ENCODE measurements at regions of chr7 and their contacts with region 1.

Region 1: GRCh38 chr7:142788303-142789289 is 17.8 kb downstream of the PRSS2 start:
- DNase-seq: peak in 5 of 9 donors; percentile 7 to 33 (median 18)
- ATAC-seq: no peak
- H3K4me3 ChIP-seq: peak overlapping the region; percentile 96
- H3K4me3 Mint-ChIP-seq: peak overlapping the region; percentile 91 to 100 (median 98)
- H3K27ac ChIP-seq: peak overlapping the region; percentile 98
- H3K27ac Mint-ChIP-seq: peak overlapping the region; percentile 95 to 100 (median 99)
- H3K4me1 ChIP-seq: peaks cover 14 to 19% of the 10 kb centered on the region in 2 donors
- H3K4me1 Mint-ChIP-seq: peaks cover 13 to 28% (median 21%) of the 10 kb centered on the region in 7 donors
- H3K27me3 ChIP-seq: no peaks in the 10 kb centered on the region
- H3K27me3 Mint-ChIP-seq: peaks cover 0 to 3% (median 0%) of the 10 kb centered on the region in 5 donors

Region 2: DNA sequence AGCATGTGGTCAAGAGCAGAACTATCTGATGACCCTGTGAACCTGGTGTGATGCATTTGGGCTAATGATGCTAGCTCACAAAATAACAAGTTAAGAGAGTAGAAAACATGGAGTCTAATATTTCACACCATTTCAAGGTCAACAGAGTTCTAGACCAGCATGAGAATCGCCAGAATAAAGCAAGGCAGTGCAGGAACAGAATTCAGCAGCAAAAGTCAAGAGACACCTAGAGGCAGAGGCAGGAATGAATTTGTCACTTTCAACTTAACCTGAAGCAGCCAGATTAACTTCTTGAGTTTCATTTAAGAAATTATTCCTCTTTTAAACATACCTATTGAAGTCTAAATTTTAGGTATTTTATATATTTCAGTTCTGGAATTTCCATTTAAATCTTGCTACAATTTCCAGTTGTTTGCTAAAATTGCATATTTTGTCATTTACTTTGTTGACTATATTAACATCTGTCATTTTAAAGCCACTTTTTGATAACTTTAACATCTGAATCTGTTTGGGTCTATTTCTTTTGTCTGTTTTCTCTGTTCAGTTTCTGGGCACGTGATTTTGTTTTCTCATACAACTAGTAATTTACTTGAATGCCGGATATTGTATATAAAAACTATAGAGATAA is 486.6 kb before region 1 on chr7:
- CTCF ChIA-PET with region 1: no interaction called
- POLR2A ChIA-PET with region 1: interaction called, 19 read pairs
- intact Hi-C with region 1: no loop called
- DNase-seq: peak in 1 of 9 donors; percentile 34
- ATAC-seq: no peak
- H3K4me3 ChIP-seq: no peak overlapping the region
- H3K4me3 Mint-ChIP-seq: peak overlapping the region in 2 of 10 donors; percentile 17 to 49
- H3K27ac ChIP-seq: no peak overlapping the region
- H3K27ac Mint-ChIP-seq: no peak overlapping the region
- H3K4me1 ChIP-seq: peaks cover 0 to 28% of the 10 kb centered on the region in 2 donors
- H3K4me1 Mint-ChIP-seq: peaks cover 7 to 52% (median 35%) of the 10 kb centered on the region in 7 donors
- H3K27me3 ChIP-seq: no peaks in the 10 kb centered on the region
- H3K27me3 Mint-ChIP-seq: peaks cover 4 to 25% (median 16%) of the 10 kb centered on the region in 5 donors

Region 3: DNA sequence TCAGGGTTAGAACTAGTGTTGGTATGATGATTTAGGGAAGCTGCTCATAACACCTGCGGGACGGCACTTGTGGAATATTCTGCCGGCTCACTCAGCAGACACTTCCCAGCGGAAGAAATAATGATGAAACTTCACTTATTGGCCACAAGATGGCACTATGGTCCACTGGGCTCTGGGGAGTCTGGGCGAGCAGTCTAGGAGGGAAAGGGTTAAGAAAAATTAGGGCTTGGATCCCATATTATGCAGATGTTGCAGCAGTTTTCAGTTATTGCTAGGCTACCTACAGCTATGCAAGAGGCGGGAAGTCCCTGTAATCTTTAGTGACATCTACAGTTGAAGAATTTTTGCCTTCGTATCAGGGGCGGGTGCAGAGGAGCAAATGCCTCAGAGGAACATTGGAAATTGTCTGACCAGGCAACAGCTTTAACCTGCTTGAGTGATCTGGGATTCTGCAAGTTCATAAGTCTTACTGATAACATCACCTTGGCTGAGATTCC is 292.0 kb before region 1 on chr7:
- CTCF ChIA-PET with region 1: no interaction called
- POLR2A ChIA-PET with region 1: interaction called, 16 read pairs
- intact Hi-C with region 1: no loop called
- DNase-seq: peak in 7 of 9 donors; percentile 39 to 58 (median 45)
- ATAC-seq: peak; percentile 71
- H3K4me3 ChIP-seq: peak overlapping the region; percentile 30
- H3K4me3 Mint-ChIP-seq: peak overlapping the region; percentile 41 to 85 (median 70)
- H3K27ac ChIP-seq: peak overlapping the region; percentile 64
- H3K27ac Mint-ChIP-seq: peak overlapping the region; percentile 33 to 93 (median 77)
- H3K4me1 ChIP-seq: peaks cover 5 to 46% of the 10 kb centered on the region in 2 donors
- H3K4me1 Mint-ChIP-seq: peaks cover 15 to 72% (median 65%) of the 10 kb centered on the region in 7 donors
- H3K27me3 ChIP-seq: no peaks in the 10 kb centered on the region
- H3K27me3 Mint-ChIP-seq: peaks cover 0 to 9% (median 0%) of the 10 kb centered on the region in 5 donors

Region 4: GRCh38 chr7:142612237-142612881 is 176.2 kb before region 1 on chr7:
- CTCF ChIA-PET with region 1: no interaction called
- POLR2A ChIA-PET with region 1: interaction called, 10 read pairs
- intact Hi-C with region 1: no loop called
- DNase-seq: no peak
- ATAC-seq: no peak
- H3K4me3 ChIP-seq: no peak overlapping the region
- H3K4me3 Mint-ChIP-seq: no peak overlapping the region
- H3K27ac ChIP-seq: no peak overlapping the region
- H3K27ac Mint-ChIP-seq: peak overlapping the region in 5 of 9 donors; percentile 5 to 42 (median 38)
- H3K4me1 ChIP-seq: no peaks in the 10 kb centered on the region
- H3K4me1 Mint-ChIP-seq: peaks cover 0 to 45% (median 15%) of the 10 kb centered on the region in 7 donors
- H3K27me3 ChIP-seq: no peaks in the 10 kb centered on the region
- H3K27me3 Mint-ChIP-seq: peaks cover 0 to 8% (median 4%) of the 10 kb centered on the region in 5 donors

Region 5: DNA sequence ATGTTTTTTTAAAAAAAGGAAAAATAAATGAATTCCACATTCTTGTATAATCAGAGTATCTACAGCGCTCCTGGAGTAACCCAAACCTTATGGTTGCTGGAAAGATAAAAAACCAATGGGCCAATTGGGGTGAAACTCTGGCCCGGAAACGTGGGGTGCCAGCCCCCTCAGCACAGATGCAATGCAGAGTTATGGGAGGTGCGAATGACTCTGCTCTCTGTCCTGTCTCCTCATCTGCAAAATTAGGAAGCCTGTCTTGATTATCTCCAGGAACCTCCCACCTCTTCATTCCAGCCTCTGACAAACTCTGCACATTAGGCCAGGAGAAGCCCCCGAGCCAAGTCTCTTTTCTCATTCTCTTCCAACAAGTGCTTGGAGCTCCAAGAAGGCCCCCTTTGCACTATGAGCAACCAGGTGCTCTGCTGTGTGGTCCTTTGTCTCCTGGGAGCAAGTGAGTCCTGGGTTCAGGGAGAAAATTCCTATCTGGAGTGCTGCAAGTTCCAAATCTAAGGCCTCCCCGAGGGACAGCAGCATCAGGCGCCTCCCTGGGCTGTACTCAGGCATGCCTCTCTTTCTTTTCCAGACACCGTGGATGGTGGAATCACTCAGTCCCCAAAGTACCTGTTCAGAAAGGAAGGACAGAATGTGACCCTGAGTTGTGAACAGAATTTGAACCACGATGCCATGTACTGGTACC is 169.8 kb before region 1 on chr7:
- CTCF ChIA-PET with region 1: interaction called, 4 read pairs
- POLR2A ChIA-PET with region 1: interaction called, 11 read pairs
- intact Hi-C with region 1: no loop called
- DNase-seq: no peak
- ATAC-seq: no peak
- H3K4me3 ChIP-seq: peak overlapping the region; percentile 36
- H3K4me3 Mint-ChIP-seq: peak overlapping the region; percentile 55 to 82 (median 68)
- H3K27ac ChIP-seq: peak overlapping the region; percentile 65
- H3K27ac Mint-ChIP-seq: peak overlapping the region in 8 of 9 donors; percentile 68 to 81 (median 74)
- H3K4me1 ChIP-seq: no peaks in the 10 kb centered on the region
- H3K4me1 Mint-ChIP-seq: peaks cover 0 to 17% (median 7%) of the 10 kb centered on the region in 7 donors
- H3K27me3 ChIP-seq: no peaks in the 10 kb centered on the region
- H3K27me3 Mint-ChIP-seq: peaks cover 0 to 27% (median 4%) of the 10 kb centered on the region in 5 donors

Region 6: DNA sequence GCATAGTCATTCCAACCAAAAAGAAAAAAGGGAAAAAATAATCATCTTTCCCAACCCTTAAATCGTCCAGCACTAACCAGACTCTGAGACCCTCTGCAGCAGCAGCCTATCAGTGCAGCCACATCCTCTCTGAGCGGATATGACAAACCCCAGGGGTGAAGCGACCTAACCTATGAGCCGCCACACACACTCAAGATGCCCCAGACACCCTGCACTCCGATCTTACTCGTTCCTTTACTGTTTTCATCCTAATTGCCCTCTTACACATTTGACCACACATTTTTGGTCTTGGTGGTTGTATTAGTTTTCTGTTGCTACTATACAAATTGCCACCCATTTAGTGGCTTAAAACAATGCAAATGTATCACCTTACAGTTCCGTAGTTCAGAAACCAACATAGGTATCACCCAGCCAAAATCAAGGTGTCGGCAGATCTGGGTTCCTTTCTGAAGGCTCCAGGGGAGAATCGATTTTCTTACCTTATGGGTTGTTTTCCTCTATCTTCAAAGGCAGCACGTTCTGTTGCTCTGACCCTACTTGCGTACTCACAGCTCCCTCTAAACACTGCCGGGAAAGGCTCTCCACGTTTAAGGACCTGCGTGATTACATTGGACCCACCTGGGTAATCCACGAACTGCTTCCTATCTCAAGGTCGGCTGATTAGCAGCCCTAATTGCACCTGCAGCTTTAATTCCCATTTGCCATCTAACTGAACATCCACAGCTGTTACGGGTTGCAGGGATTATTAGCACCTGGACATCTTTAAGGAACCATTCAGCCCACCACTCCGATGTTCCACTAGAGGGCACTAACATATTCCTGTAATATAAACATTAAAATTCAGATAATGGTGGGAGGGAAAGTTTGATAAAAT is 76.6 kb before region 1 on chr7:
- CTCF ChIA-PET with region 1: interaction called, 20 read pairs
- POLR2A ChIA-PET with region 1: interaction called, 49 read pairs
- intact Hi-C with region 1: loop called (anchors 1 kb)
- DNase-seq: no peak
- ATAC-seq: peak; percentile 75
- H3K4me3 ChIP-seq: peak overlapping the region; percentile 46
- H3K4me3 Mint-ChIP-seq: peak overlapping the region; percentile 76 to 94 (median 88)
- H3K27ac ChIP-seq: peak overlapping the region; percentile 62
- H3K27ac Mint-ChIP-seq: peak overlapping the region; percentile 81 to 96 (median 91)
- H3K4me1 ChIP-seq: peaks cover 31 to 50% of the 10 kb centered on the region in 2 donors
- H3K4me1 Mint-ChIP-seq: peaks cover 20 to 76% (median 63%) of the 10 kb centered on the region in 7 donors
- H3K27me3 ChIP-seq: no peaks in the 10 kb centered on the region
- H3K27me3 Mint-ChIP-seq: peaks cover 0 to 1% (median 0%) of the 10 kb centered on the region in 5 donors

Measured in naive thymus-derived CD4-positive, alpha-beta T cell (primary cell).